Gastrocnemius medialis (tissue), 4 donors: ENCODE measurements at regions of chr1 and their contacts with region 1.

Region 1: DNA sequence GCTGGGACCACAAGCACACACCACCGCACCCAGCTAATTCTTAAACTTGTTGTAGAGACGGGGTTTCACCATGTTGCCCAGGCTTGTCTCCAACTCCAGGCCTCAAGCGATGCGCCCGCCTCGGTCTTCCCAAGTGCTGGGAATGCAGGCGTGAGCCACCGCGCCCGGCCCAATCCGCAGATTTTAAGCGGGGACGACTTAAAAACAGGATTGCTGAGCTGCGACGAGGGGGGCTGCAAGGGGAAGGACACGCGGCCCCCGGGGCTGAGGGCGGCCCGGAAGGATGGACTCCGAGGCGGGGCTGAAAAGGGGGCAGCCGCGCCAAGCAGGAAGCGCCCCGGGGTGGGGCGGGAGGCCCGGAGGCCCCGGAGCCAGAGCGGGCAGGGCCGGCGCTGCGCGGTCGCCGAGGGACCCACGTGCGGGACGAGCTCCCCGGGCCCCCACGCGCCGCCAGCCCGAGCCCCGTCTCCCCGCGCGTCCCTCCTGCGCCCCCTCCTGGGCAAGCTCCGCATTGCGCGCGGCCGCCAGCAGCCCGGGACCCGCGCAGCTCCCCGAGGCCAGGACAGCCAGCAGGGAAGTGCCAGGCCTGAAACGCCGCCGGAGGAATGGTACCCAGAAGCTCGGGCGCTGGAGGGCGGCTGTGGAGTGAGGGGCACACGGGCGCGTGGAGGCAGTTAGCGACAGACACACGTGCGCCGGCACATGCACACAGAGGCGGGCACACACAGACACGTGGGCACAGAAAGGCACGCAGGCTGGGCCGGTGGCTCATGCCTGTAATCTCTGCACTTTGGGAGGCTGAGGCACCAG is 5.5 kb upstream of the PRKCZ start:
- DNase-seq: peak in 1 of 2 donors; percentile 37
- ATAC-seq: peak in 1 of 2 donors; percentile 62
- H3K4me3 ChIP-seq: peak overlapping the region in 3 of 4 donors; percentile 16 to 36 (median 34)
- H3K27ac ChIP-seq: no peak overlapping the region
- H3K4me1 ChIP-seq: peaks cover 5% of the 10 kb centered on the region in 2 donors
- H3K27me3 ChIP-seq: peaks cover 24 to 32% (median 27%) of the 10 kb centered on the region in 3 donors
- CTCF ChIP-seq: peak; percentile 60 to 93 (median 84)
- POLR2A ChIP-seq: no peak

Region 2: DNA sequence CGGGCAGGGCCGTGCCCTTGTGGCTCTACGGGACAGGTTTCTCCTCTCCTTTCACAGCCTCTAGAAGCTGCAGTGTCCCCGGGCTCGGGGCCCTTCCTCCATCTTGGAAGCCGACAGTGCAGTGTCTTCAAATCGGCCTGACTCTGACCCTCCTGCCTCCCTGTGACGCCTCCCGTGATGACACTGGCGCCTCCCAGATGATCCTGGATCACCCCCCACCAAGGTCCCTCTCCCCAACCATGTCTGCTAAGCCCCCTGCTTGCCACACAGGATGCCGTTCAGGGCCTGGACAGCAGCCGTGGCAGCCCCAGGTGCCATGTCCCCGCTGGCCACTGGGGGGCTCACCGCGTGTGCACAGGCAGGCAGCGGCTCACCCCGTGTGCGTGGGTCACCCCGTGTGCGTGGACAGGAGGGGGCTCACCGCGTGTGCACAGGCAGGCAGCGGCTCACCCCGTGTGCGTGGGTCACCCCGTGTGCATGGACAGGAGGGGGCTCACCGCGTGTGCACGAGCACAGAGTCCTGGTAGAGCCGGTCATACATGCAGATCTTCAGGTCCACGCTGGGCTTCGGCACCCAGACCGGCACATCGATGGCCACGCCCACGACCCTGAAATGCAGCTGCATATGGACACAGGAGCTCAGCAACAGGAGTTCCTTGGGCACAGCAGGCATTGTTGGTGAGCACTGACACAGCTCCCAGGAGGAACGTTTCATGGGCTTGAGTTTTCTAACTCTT is 100.7 kb before region 1 on chr1:
- in situ Hi-C with region 1: loop called in 1 of 4 experiments (anchors 10 kb)
- intact Hi-C with region 1: loop called (anchors 1 kb)
- DNase-seq: no peak
- ATAC-seq: no peak
- H3K4me3 ChIP-seq: no peak overlapping the region
- H3K27ac ChIP-seq: no peak overlapping the region
- H3K4me1 ChIP-seq: peaks cover 0 to 3% of the 10 kb centered on the region in 2 donors
- H3K27me3 ChIP-seq: peaks cover 8 to 14% (median 12%) of the 10 kb centered on the region in 3 donors
- CTCF ChIP-seq: peak; percentile 54 to 92 (median 78)
- POLR2A ChIP-seq: no peak

Region 3: DNA sequence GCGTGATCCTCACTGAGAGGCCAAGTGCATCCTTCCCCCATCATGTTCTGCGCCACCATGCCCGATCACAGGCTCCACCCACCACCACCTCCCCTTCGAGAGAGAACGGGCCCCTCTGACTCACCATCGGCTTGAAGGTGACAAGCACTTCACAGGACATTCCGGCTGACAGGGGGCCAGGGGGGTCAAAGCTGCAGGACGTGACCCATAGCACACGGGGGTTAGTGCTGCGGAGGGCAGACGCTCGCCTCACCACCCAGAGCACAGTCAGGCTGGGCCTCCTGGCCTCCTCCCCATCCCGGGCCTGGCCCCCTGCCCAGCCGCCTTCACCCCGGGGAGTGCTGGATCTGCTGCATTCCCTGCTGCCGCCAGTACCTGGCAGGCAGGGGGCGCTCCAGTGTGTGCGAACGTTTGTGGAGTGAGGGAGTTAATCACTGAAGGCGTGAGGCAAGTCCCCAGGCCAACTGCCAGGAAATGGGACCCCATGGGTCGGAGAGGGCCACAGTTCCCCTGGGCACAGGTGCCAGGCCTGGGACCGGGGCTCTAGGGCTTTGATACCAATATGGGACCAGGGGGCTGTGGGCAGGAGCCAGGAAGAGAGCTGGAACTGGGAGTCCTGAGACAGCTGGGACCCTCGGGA is 84.8 kb before region 1 on chr1:
- in situ Hi-C with region 1: no loop called
- intact Hi-C with region 1: loop called (anchors 1 kb)
- DNase-seq: peak; percentile 9 to 37
- ATAC-seq: peak in 1 of 2 donors; percentile 41
- H3K4me3 ChIP-seq: no peak overlapping the region
- H3K27ac ChIP-seq: no peak overlapping the region
- H3K4me1 ChIP-seq: no peaks in the 10 kb centered on the region
- H3K27me3 ChIP-seq: peaks cover 40 to 59% (median 48%) of the 10 kb centered on the region in 3 donors
- CTCF ChIP-seq: peak in 4 of 5 experiments; percentile 36 to 61 (median 56)
- POLR2A ChIP-seq: no peak

Region 4: GRCh38 chr1:3410142-3410925 is 1365.6 kb after region 1 on chr1:
- in situ Hi-C with region 1: no loop called
- intact Hi-C with region 1: no loop called
- DNase-seq: no peak
- ATAC-seq: no peak
- H3K4me3 ChIP-seq: no peak overlapping the region
- H3K27ac ChIP-seq: no peak overlapping the region
- H3K4me1 ChIP-seq: no peaks in the 10 kb centered on the region
- H3K27me3 ChIP-seq: peaks cover 3 to 13% (median 5%) of the 10 kb centered on the region in 3 donors
- CTCF ChIP-seq: peak; percentile 18 to 56 (median 51)
- POLR2A ChIP-seq: no peak